Colonic mucosa (tissue), 4 donors: ENCODE measurements at regions of chr6 and their contacts with region 1.

Region 1: GRCh38 chr6:14066782-14067406 is 50.7 kb upstream of the CD83 start:
- DNase-seq: no peak
- H3K4me3 ChIP-seq: no peak overlapping the region
- H3K27ac ChIP-seq: no peak overlapping the region
- H3K4me1 ChIP-seq: no peaks in the 10 kb centered on the region
- H3K27me3 ChIP-seq: no peaks in the 10 kb centered on the region
- CTCF ChIP-seq: peak; percentile 52

Region 2: GRCh38 chr6:13914351-13914750 is 152.5 kb before region 1 on chr6:
- intact Hi-C with region 1: loop called (anchors 5 kb)
- DNase-seq: no peak
- H3K4me3 ChIP-seq: no peak overlapping the region
- H3K27ac ChIP-seq: no peak overlapping the region
- H3K4me1 ChIP-seq: no peaks in the 10 kb centered on the region
- H3K27me3 ChIP-seq: no peaks in the 10 kb centered on the region
- CTCF ChIP-seq: no peak